Prostate gland (tissue), 2 donors: ENCODE measurements at regions of chrX and their contacts with region 1.

Region 1: DNA sequence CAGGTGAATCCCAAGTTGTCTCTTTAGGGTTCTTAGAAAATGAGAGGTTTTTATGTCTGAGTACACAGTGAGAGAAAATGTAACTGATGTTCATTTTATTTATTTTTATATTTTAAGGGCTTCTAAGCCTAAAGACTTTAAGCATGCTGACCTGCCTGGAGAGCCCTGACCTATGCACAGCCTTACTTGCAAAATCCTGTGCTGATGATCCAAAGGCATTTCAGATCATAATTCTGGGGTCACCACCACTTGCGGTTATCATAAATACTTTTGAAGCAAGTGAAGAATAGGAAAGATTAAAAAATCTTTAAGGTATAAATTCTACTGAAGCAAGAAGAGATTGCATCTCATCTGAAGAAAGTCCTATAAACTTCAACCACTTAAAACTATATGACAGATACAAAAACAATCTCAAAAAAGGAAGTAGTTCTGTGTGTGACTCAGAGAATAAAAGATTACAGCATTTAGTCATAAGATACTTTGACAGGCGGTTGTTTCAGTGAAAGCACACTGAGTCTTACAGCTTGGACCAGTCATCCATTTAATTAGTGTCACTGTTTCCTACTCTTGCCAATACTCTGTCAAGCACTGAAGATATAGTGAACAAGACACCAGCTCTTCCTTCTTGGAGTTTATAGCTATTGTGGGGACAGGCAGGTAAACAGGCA is 245.2 kb upstream of the DIPK2B start:
- DNase-seq: no peak
- H3K4me3 ChIP-seq: no peak overlapping the region
- H3K27ac ChIP-seq: no peak overlapping the region
- H3K4me1 ChIP-seq: no peaks in the 10 kb centered on the region
- H3K27me3 ChIP-seq: no peaks in the 10 kb centered on the region
- CTCF ChIP-seq: no peak
- POLR2A ChIP-seq: no peak

Region 2: DNA sequence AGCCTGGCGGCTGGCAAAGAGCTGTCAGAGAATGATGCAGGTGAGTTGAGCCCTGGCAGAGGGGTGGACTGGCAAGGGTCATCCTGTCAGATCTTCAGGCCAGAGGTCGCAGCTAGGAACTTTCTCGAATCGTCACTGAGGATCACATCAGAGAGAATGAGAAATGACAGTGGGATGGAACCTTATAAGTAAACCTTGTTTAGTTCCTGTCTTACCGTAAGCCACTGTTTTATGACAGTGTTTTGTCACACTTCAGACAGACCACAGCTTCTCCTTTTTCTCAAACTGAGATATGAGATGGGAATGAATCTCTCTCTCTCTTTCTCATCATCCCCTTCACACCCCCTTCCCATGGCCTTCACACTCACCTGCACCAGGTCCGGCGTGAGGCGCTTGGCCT is 254.5 kb before region 1 on chrX:
- intact Hi-C with region 1: no loop called
- DNase-seq: no peak
- H3K4me3 ChIP-seq: no peak overlapping the region
- H3K27ac ChIP-seq: no peak overlapping the region
- H3K4me1 ChIP-seq: no peaks in the 10 kb centered on the region
- H3K27me3 ChIP-seq: no peaks in the 10 kb centered on the region
- CTCF ChIP-seq: no peak
- POLR2A ChIP-seq: no peak

Region 3: GRCh38 chrX:45385757-45386156 is 60.1 kb before region 1 on chrX:
- intact Hi-C with region 1: no loop called
- DNase-seq: no peak
- H3K4me3 ChIP-seq: no peak overlapping the region
- H3K27ac ChIP-seq: no peak overlapping the region
- H3K4me1 ChIP-seq: no peaks in the 10 kb centered on the region
- H3K27me3 ChIP-seq: no peaks in the 10 kb centered on the region
- CTCF ChIP-seq: no peak
- POLR2A ChIP-seq: no peak

Region 4: GRCh38 chrX:45505214-45505613 is 59.3 kb after region 1 on chrX:
- intact Hi-C with region 1: loop called (anchors 5 kb)
- DNase-seq: no peak
- H3K4me3 ChIP-seq: no peak overlapping the region
- H3K27ac ChIP-seq: peak overlapping the region in 1 of 2 donors; percentile 43
- H3K4me1 ChIP-seq: no peaks in the 10 kb centered on the region
- H3K27me3 ChIP-seq: no peaks in the 10 kb centered on the region
- CTCF ChIP-seq: no peak
- POLR2A ChIP-seq: no peak

Region 5: GRCh38 chrX:45849253-45849862 is 403.5 kb after region 1 on chrX:
- intact Hi-C with region 1: no loop called
- DNase-seq: peak; percentile 15
- H3K4me3 ChIP-seq: no peak overlapping the region
- H3K27ac ChIP-seq: no peak overlapping the region
- H3K4me1 ChIP-seq: no peaks in the 10 kb centered on the region
- H3K27me3 ChIP-seq: no peaks in the 10 kb centered on the region
- CTCF ChIP-seq: peak in 2 of 4 experiments; percentile 24 to 29
- POLR2A ChIP-seq: no peak